ENCODE measurements at regions of chr1 and their contacts with region 1.

Region 1: DNA sequence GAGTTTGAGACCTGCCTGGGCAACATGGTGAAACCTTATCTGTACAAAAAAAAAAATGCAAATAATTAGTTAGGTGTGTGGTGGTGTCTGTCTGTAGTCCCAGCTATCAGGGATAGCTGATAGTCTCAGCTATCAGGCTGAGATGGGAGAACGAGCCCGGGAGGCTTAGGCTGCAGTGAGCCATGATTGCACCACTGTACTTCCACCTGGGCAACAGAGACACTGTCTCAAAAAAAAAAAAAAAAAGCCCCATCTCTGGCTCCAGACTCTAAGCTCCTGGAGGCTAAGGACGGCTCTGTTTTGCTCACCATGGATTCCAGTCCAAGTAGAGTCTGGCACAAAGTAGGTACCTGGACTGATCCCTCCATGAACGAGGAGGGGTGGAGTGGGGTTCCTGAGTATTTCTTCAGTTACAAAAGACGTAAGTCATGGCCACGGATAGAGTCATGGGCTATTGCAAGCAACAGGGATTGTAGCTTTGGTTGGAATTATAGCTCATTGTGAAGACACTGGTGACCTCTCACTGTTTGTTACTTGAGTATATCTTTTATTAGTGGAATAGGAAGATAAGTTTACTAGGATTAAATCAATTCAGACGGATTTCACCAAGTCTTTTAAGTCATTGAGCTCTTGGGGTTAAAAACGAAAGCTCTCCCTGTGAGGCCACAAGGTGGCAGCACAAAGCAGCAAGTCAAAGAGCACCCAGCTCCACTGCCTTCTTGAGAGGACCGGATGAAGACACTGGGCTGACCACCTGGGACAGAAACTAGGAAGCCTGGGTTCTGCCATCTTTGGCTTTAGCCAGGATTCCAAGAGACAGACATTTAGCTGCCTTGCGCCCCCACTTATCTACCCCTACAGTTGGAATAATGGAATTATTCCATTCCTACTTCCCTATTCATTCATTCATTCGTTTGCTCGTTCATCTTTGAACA is 35.6 kb upstream of the TMEM61 start:
- DNase-seq: peak; percentile 75
- ATAC-seq: peak; percentile 94
- H3K4me3 ChIP-seq: no peak overlapping the region
- H3K27ac ChIP-seq: no peak overlapping the region
- H3K4me1 ChIP-seq: no peaks in the 10 kb centered on the region
- H3K27me3 ChIP-seq: no peaks in the 10 kb centered on the region
- CTCF ChIP-seq: peak; percentile 87

Region 2: GRCh38 chr1:54996359-54996868 is 51.5 kb after region 1 on chr1:
- intact Hi-C with region 1: loop called (anchors 5 kb)
- DNase-seq: peak; percentile 89
- ATAC-seq: peak; percentile 92
- H3K4me3 ChIP-seq: no peak overlapping the region
- H3K27ac ChIP-seq: no peak overlapping the region
- H3K4me1 ChIP-seq: no peaks in the 10 kb centered on the region
- H3K27me3 ChIP-seq: peaks cover 48% of the 10 kb centered on the region
- CTCF ChIP-seq: peak; percentile 74